ENCODE measurements at regions of chr11 and their contacts with region 1.

Region 1: GRCh38 chr11:119533921-119534736 is 111.2 kb upstream of the THY1 start:
- DNase-seq: peak; percentile 68
- H3K4me3 Mint-ChIP-seq: no peak overlapping the region
- H3K27ac Mint-ChIP-seq: no peak overlapping the region
- H3K4me1 Mint-ChIP-seq: no peaks in the 10 kb centered on the region
- H3K27me3 Mint-ChIP-seq: peaks cover 73% of the 10 kb centered on the region
- CTCF ChIP-seq: peak; percentile 87

Region 2: DNA sequence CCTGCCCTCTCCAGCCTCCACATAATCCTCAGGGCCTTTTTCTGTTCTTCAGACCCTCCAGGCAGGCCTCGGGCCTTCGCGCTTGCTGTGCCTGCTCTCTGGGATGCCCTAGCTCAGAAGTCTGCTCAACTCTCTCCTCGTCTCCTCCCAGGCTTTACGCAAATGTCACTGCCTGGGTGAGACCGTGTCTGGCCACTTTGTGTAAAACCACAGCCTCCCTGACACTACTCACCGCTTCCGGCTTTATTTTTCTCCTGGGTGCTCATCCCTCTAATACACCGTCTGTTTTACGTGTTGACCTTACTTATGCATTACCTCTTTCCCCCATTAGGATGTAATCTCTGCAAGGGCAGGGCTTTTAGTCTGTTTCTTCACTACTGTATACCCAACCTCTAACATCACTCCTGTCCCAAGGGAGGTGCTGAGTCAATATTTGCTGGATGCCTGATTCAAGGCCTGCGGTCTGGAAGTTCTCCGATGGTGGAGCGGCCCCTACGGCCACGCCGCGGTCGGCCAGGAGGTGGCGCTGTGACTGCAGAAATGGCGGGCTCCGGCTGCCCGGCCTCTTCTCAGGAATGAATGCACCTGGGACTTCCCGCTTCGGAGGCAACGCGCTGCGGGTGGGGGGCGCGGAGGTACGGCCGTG is 53.0 kb before region 1 on chr11:
- CTCF ChIA-PET with region 1: interaction called, 11 read pairs
- POLR2A ChIA-PET with region 1: no interaction called
- intact Hi-C with region 1: loop called (anchors 1 kb)
- DNase-seq: peak; percentile 80
- H3K4me3 Mint-ChIP-seq: no peak overlapping the region
- H3K27ac Mint-ChIP-seq: peak overlapping the region; percentile 27
- H3K4me1 Mint-ChIP-seq: peaks cover 7% of the 10 kb centered on the region
- H3K27me3 Mint-ChIP-seq: peaks cover 14% of the 10 kb centered on the region
- CTCF ChIP-seq: peak; percentile 98

Region 3: DNA sequence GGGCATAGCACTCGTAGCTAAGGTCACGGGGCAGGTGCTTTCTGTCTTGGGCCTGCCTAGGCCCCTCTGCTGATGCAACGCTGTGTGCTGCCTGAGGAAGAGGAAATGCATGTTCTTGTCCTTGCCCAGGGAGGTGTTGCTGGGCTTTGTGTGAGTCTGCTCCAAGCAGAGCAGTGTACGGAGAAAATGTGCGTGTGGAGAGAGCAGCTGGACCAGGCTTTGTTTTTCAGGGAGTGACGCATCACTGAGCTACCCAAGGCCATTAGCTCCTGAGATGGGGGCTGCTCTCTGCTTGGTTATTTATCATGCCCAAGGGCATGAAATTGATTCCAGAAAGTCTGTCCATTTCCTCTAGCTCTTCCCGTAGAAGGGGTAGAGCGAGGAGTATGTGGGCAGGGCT is 28.3 kb before region 1 on chr11:
- CTCF ChIA-PET with region 1: interaction called, 15 read pairs
- POLR2A ChIA-PET with region 1: interaction called, 3 read pairs
- intact Hi-C with region 1: no loop called
- DNase-seq: no peak
- H3K4me3 Mint-ChIP-seq: no peak overlapping the region
- H3K27ac Mint-ChIP-seq: no peak overlapping the region
- H3K4me1 Mint-ChIP-seq: peaks cover 8% of the 10 kb centered on the region
- H3K27me3 Mint-ChIP-seq: peaks cover 19% of the 10 kb centered on the region
- CTCF ChIP-seq: no peak

Region 4: DNA sequence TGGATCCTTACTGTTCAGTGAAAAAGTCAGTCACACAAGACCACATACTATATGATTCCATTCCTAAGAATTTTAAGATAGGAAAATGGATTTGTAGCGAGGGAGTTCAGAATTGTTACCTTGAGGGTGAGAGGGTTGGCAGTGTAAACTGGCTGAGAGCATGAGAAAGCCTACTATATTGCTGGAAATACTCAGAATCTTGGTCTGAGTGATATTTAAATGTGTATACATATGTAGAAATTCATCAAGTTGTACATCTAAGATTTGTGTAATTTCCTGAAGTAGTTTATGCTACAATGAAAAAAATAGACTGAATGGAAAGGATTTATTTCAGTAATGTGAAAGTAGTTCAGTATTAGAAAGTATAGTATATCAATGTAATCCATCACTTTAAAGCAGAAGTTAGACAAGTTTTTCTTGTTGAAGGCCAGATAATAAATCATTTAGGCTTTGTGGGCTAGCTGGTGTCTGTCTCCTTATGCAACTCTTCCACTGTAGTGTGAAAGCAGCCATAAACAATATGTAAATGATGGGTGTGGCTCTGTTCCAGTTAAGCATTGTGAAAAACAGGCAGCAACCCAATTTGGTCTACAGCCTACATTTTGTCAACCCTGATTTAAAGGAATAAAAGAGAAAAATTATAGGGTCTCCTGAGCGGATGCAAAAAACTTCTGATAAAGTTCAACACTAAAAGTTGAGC is 16.1 kb after region 1 on chr11:
- CTCF ChIA-PET with region 1: interaction called, 14 read pairs
- POLR2A ChIA-PET with region 1: no interaction called
- intact Hi-C with region 1: no loop called
- DNase-seq: peak; percentile 17
- H3K4me3 Mint-ChIP-seq: no peak overlapping the region
- H3K27ac Mint-ChIP-seq: no peak overlapping the region
- H3K4me1 Mint-ChIP-seq: no peaks in the 10 kb centered on the region
- H3K27me3 Mint-ChIP-seq: no peaks in the 10 kb centered on the region
- CTCF ChIP-seq: no peak

Region 5: GRCh38 chr11:119599864-119600541 is 65.9 kb after region 1 on chr11:
- CTCF ChIA-PET with region 1: no interaction called
- POLR2A ChIA-PET with region 1: no interaction called
- intact Hi-C with region 1: no loop called
- DNase-seq: no peak
- H3K4me3 Mint-ChIP-seq: no peak overlapping the region
- H3K27ac Mint-ChIP-seq: no peak overlapping the region
- H3K4me1 Mint-ChIP-seq: peaks cover 7% of the 10 kb centered on the region
- H3K27me3 Mint-ChIP-seq: peaks cover 28% of the 10 kb centered on the region
- CTCF ChIP-seq: no peak